ENCODE measurements at regions of chr7 and their contacts with region 1.

Region 1: DNA sequence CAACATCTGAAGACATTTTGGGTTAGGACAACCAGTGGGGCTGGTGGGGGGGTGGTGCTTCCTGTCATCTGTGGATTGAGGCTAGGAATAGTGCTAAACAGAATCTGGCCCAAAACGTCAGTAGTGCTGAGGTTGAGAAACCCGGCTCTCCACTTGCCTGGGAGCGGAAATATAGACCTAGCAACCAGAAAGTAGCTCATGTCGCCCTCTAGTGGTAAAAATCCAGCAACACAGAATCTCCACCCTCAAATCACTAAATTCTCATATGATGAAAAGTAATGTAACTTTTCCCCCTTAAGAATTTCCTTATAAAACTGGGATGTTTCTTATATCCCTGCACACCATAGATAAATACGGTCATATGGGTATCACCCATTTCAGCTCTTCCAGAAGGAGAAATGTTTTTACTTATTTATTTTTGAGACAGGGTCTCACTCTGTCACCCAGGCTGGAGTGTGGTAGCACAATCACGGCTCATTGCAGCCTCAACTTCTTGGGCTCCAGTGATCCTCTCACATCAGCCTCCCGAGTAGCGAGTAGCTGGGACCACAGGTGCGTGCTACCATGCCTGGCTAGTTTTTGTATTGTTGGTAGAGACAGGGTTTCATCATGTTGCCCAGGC is 34.4 kb downstream of the ZC3HAV1 start:
- DNase-seq: no peak
- H3K4me3 ChIP-seq: peak overlapping the region in 1 of 8 donors; percentile 17
- H3K27ac ChIP-seq: peak overlapping the region in 7 of 8 donors; percentile 1 to 77 (median 66)
- H3K4me1 ChIP-seq: peaks cover 5 to 78% (median 46%) of the 10 kb centered on the region in 6 donors
- H3K27me3 ChIP-seq: no peaks in the 10 kb centered on the region
- CTCF ChIP-seq: peak; percentile 62 to 91 (median 86)
- POLR2A ChIP-seq: no peak

Region 2: GRCh38 chr7:139016931-139017511 is 58.1 kb before region 1 on chr7:
- intact Hi-C with region 1: loop called (anchors 2 kb)
- DNase-seq: peak; percentile 77
- H3K4me3 ChIP-seq: no peak overlapping the region
- H3K27ac ChIP-seq: no peak overlapping the region
- H3K4me1 ChIP-seq: peaks cover 0 to 10% (median 8%) of the 10 kb centered on the region in 6 donors
- H3K27me3 ChIP-seq: peaks cover 0 to 5% (median 0%) of the 10 kb centered on the region in 7 donors
- CTCF ChIP-seq: peak; percentile 27 to 68 (median 61)
- POLR2A ChIP-seq: no peak

Region 3: DNA sequence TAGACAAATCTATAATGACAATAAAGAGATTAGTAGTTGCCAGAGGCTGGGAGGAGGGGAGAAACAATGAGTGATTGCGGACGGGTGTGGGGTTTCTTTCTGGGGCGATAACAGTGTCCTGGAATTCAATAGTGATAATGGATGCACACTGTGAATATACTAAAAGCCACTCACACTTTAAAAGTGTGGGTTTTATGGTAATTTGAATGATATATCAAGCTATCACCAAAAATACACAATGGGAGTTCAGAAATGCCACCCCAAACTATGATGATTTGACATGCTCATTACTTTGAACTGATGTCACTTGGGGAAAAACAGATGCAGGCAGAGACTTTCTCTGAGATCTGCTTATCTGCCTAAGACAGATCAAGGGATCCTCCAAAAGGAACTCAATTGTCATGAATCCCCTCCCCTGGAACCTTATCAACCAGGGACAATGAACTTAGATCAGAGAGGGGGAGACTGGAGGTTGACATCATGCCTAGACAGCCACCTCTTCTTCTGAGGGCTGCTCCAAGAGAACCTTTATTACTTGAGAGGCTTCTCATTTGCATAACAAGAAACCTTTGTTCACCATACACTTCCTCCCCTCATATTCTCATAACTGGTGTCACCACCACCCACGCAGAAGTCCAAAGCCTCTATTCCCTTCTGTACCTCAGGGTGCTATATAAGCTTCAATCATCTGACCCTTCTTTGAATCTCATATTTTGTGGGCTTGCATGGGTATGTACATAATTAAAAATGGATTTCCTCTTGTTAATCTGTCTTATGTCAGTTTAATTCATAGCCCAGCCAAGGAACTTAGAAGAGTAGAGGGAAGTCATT is 49.2 kb after region 1 on chr7:
- intact Hi-C with region 1: loop called (anchors 10 kb)
- DNase-seq: no peak
- H3K4me3 ChIP-seq: no peak overlapping the region
- H3K27ac ChIP-seq: no peak overlapping the region
- H3K4me1 ChIP-seq: peaks cover 0 to 22% (median 5%) of the 10 kb centered on the region in 6 donors
- H3K27me3 ChIP-seq: no peaks in the 10 kb centered on the region
- CTCF ChIP-seq: no peak
- POLR2A ChIP-seq: no peak

Measured in spleen (tissue), 13 donors.